ENCODE measurements at regions of chr3 and their contacts with region 1.

Region 1: GRCh38 chr3:50227390-50228183 is 8.4 kb upstream of the GNAI2 start:
- DNase-seq: peak; percentile 91
- H3K4me3 ChIP-seq: peak overlapping the region; percentile 76
- H3K27ac ChIP-seq: peak overlapping the region; percentile 87
- H3K4me1 ChIP-seq: peaks cover 26% of the 10 kb centered on the region
- H3K27me3 ChIP-seq: peaks cover 10% of the 10 kb centered on the region
- CTCF ChIP-seq: peak; percentile 97

Region 2: GRCh38 chr3:50272911-50273693 is 45.5 kb after region 1 on chr3:
- intact Hi-C with region 1: loop called (anchors 5 kb)
- DNase-seq: peak; percentile 85
- H3K4me3 ChIP-seq: peak overlapping the region; percentile 55
- H3K27ac ChIP-seq: peak overlapping the region; percentile 12
- H3K4me1 ChIP-seq: peaks cover 57% of the 10 kb centered on the region
- H3K27me3 ChIP-seq: peaks cover 31% of the 10 kb centered on the region
- CTCF ChIP-seq: peak; percentile 97

Measured in left ventricle myocardium inferior (tissue), 1 donor.